Psoas muscle (tissue), 8 donors: ENCODE measurements at regions of chr11 and their contacts with region 1.

Region 1: DNA sequence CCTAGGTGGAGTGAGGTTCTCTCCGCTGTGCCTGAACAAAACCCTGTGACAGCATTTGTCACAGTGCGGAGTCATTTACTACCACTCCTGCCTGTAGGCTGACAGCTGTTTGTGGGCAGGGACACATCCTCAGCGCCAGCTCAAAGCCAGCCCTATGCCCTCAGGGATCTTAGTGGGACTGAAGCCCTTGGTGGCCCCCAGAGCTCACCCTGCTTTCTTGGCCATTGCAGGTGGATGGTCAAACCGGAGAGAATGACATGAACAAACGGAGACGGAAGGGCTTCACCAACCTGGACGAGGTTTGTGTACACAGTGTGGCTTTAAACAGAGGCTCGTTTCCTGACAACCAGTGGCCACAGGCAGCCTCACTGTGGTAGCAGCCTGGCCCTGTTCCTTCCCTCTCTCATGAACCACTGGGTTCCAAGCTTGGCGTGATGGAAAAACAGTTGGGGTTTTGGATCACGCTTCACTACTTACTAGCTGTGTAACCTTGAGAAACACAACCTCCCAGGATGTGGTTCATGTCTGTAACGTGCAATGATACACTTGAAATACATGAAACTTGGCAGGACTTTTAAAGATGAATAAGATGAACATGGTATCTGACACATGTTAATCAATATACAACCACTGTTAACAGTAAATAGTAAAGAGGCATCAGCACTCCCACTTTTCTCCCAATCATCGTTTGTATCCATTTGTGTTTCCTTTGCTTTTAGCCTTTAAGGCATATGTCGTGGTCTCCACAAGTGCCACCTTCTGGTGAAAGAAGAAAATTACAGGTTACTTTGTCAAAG is 125.8 kb downstream of the MICAL2 start:
- DNase-seq: no peak
- ATAC-seq: peak; percentile 85 to 90 (median 87)
- H3K4me3 ChIP-seq: no peak overlapping the region
- H3K27ac ChIP-seq: peak overlapping the region; percentile 74
- H3K4me1 ChIP-seq: peaks cover 18% of the 10 kb centered on the region
- H3K27me3 ChIP-seq: no peaks in the 10 kb centered on the region
- CTCF ChIP-seq: peak; percentile 75

Region 2: GRCh38 chr11:12122083-12122482 is 114.1 kb before region 1 on chr11:
- intact Hi-C with region 1: loop called in 1 of 2 experiments (anchors 5 kb)
- DNase-seq: no peak
- ATAC-seq: peak in 3 of 4 donors; percentile 46 to 52 (median 48)
- H3K4me3 ChIP-seq: no peak overlapping the region
- H3K27ac ChIP-seq: no peak overlapping the region
- H3K4me1 ChIP-seq: peaks cover 13% of the 10 kb centered on the region
- H3K27me3 ChIP-seq: no peaks in the 10 kb centered on the region
- CTCF ChIP-seq: peak; percentile 12

Region 3: DNA sequence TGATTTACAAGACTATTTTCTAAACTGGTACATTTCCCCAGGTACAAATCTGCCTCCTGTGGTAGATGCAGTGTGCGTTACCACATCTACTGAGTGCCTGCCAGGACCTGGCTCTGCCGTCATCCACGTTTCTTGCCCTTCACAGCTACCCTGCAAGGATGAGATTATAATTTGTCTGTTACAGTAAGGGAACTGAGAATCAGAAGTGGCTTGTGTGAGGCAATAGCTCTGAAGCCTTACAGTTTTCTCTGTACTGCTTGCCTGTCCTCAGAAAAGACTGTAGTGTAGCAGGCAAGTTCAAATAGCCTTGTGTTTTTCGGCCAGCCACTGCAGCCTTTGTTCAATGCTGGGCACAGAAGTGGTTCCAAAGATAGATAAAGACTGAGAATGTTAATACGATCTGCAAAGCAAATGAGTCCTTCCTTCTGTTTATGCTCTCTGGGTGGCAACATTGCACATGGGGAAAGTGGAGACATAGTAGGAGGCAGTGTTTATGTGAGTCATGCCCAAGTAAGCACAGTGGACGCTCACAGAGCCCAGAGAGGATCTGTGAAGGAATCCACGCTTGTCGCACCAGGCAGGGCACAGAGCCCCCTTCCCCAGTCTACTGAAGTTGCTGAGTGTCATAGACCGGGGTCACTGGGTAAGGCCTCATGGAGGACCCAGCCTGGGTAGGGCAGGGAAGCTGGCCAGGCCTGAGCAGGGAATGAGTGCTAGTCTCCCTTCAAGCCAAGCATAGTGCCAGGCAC is 76.6 kb before region 1 on chr11:
- intact Hi-C with region 1: loop called in 1 of 2 experiments (anchors 5 kb)
- DNase-seq: no peak
- ATAC-seq: peak; percentile 84 to 95 (median 88)
- H3K4me3 ChIP-seq: no peak overlapping the region
- H3K27ac ChIP-seq: peak overlapping the region; percentile 67
- H3K4me1 ChIP-seq: peaks cover 37% of the 10 kb centered on the region
- H3K27me3 ChIP-seq: no peaks in the 10 kb centered on the region
- CTCF ChIP-seq: no peak

Region 4: GRCh38 chr11:12293486-12293885 is 57.3 kb after region 1 on chr11:
- intact Hi-C with region 1: no loop called
- DNase-seq: no peak
- ATAC-seq: no peak
- H3K4me3 ChIP-seq: no peak overlapping the region
- H3K27ac ChIP-seq: no peak overlapping the region
- H3K4me1 ChIP-seq: peaks cover under 1% of the 10 kb centered on the region
- H3K27me3 ChIP-seq: no peaks in the 10 kb centered on the region
- CTCF ChIP-seq: no peak

Region 5: GRCh38 chr11:12449961-12450715 is 214.0 kb after region 1 on chr11:
- intact Hi-C with region 1: no loop called
- DNase-seq: no peak
- ATAC-seq: no peak
- H3K4me3 ChIP-seq: no peak overlapping the region
- H3K27ac ChIP-seq: no peak overlapping the region
- H3K4me1 ChIP-seq: no peaks in the 10 kb centered on the region
- H3K27me3 ChIP-seq: no peaks in the 10 kb centered on the region
- CTCF ChIP-seq: no peak